ENCODE measurements at regions of chr4 and their contacts with region 1.

Region 1: GRCh38 chr4:129008096-129008495 is 85.2 kb downstream of the SCLT1 start:
- DNase-seq: no peak
- H3K4me3 Mint-ChIP-seq: no peak overlapping the region
- H3K27ac Mint-ChIP-seq: no peak overlapping the region
- H3K4me1 Mint-ChIP-seq: no peaks in the 10 kb centered on the region
- H3K27me3 Mint-ChIP-seq: no peaks in the 10 kb centered on the region
- CTCF ChIP-seq: no peak

Region 2: DNA sequence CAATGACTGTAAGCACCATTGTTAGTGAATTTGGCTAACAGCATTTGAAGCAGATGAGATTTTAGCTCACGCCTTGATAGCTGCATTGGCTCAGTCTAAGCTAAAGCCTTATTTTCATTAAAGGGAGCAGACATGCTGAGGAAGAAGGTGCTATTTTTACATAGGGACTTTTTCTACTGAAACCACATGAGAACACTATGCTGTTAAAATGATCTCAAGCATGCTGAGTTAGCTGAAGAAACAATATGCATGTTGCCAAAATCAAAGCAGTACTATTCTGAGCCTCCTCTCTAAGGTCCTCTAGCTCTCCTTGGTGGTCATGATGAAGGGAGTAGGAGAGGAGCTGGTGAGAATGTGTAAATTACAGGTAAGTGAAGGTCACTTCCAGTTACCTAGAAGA is 333.0 kb before region 1 on chr4:
- CTCF ChIA-PET with region 1: no interaction called
- intact Hi-C with region 1: no loop called
- DNase-seq: no peak
- H3K4me3 Mint-ChIP-seq: no peak overlapping the region
- H3K27ac Mint-ChIP-seq: no peak overlapping the region
- H3K4me1 Mint-ChIP-seq: no peaks in the 10 kb centered on the region
- H3K27me3 Mint-ChIP-seq: no peaks in the 10 kb centered on the region
- CTCF ChIP-seq: no peak

Region 3: DNA sequence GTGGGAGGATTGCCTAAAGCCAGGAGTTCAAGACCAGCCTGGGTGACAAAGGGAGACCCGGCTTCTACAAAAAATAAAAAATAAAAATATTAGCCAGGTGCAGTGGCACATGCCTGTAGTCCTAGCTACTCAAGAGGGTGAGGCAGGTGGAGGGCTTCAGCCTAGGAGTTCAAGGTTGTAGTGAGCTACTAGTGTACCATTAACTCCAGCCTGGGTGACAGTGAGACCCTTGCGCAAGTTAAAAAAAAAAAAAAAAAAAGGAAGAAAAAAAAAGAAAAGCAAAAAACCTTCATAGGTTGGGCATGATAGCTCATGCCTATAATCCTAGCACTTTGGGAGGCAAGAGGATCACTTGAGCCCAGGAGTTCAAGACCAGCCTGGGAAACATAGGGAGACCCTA is 79.4 kb after region 1 on chr4:
- CTCF ChIA-PET with region 1: no interaction called
- intact Hi-C with region 1: loop called (anchors 10 kb)
- DNase-seq: no peak
- H3K4me3 Mint-ChIP-seq: no peak overlapping the region
- H3K27ac Mint-ChIP-seq: no peak overlapping the region
- H3K4me1 Mint-ChIP-seq: peaks cover 9% of the 10 kb centered on the region
- H3K27me3 Mint-ChIP-seq: no peaks in the 10 kb centered on the region
- CTCF ChIP-seq: no peak